ENCODE measurements at regions of chr2 and their contacts with region 1.

Region 1: GRCh38 chr2:43484323-43484930 is 111.4 kb downstream of the THADA start:
- DNase-seq: no peak

Region 2: DNA sequence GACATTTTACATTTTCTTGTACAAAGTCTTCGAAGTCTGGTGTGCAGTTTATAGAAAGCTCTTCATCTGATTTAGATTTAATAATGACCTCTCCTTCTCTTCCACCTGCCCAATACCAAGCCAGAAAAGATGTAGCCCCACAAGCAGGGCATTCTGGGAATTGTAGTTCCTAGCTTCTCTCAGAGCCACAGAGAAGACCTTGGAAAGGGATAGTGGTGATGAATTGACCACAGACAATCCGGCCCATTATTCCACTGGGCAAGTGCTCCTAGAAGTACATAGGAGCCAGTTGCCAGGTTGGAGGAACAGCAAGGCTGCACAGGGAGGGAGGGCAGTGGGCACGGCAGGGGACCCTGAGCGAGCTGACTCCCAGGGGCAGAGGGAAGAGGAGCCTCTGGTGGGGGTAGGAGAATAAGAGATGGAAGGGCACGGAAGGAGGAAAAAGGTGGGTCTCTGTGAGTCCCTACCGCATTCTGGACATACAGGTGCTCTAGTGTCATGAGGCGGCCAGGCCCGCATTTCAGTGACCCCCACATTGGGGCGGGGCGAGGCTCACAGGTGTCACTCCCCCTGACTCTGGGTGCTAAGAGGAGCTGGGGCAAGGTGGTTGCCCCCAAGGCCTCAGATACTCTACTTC is 539.5 kb before region 1 on chr2:
- intact Hi-C with region 1: loop called (anchors 2 kb)
- DNase-seq: peak in 1 of 10 donors; percentile 64

Region 3: DNA sequence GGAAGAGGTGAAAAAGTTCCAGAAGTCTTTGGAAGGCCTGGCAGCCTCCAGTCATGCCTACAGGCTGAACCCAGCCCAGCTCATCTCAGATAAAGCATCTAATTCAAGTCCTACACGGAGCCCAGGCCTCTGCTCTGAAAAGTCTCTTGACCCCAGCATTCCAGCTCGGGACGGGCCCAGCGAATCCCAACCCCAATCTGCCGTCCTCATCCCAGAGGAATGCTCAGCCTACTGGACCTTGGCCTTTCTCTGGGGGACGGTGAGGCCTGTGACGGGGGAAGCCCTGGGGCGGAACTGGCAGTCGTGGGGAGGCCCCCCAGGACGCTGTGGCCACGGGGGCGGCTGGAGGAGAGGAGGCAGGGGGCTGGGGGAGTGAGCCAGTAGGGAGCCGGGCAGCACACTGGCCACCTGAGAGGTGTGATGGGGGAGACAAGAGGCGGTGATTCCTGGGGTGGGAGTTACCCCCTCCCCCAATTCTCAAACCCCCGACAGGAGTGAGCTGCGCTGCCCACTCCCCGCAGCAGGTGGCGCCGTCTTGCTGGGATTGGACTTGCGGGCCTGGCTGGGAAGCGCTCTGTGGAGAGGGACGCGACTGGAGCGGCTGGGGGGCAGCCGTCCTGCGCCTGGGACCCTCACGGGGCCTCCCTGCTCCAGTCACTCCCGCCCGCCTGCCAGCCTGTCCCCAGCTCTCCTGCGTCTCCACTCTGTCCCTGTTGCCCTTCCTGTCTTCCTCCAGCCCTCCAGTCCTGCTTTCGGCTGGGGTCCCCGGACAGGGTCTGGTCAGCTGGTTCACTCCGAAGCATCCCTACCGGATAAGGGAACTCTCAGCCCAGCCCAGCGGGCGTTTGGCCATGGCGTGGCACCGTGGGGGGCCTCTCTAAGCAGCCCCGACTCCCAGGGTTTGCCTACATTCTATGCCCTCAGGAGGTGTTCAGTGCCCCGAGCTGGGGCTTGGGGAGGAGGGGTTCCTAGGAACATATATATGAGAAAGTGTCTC is 509.4 kb before region 1 on chr2:
- intact Hi-C with region 1: loop called (anchors 10 kb)
- DNase-seq: peak; percentile 53 to 96 (median 80)

Region 4: DNA sequence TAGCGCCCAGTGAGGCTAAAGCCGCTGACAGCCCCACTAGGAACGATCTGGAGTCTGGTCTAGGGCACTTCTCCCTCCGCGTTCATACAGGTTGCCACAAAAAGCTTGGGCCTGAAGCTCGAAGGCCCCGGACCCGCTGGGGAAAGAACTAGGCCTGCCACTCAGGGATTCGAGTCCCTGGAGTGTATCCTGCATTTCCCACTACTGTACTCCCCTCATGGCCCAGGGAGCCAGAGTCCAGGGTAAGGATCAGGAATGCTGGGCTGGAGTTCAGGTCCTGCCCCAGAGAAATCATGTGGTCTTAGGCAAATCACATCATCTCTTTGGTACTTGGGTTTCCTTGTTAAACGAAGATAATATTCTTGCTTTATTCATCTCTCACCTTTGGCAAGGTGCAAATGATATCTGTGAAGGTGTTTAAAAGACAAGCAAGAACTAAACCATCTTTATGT is 256.6 kb before region 1 on chr2:
- intact Hi-C with region 1: loop called (anchors 2 kb)
- DNase-seq: no peak

Region 5: GRCh38 chr2:43305517-43305916 is 178.9 kb before region 1 on chr2:
- intact Hi-C with region 1: no loop called
- DNase-seq: no peak

Region 6: GRCh38 chr2:43648994-43649701 is 164.7 kb after region 1 on chr2:
- intact Hi-C with region 1: no loop called
- DNase-seq: no peak

Measured in posterior cingulate gyrus (tissue), 11 donors.